Activated B cell treated with CpG ODN at 0.5 μM for 24 hours (primary cell): ENCODE measurements at regions of chr1 and their contacts with region 1.

Region 1: GRCh38 chr1:111628153-111628552 is 8.6 kb downstream of the RAP1A start:
- DNase-seq: no peak
- ATAC-seq: no peak
- H3K4me3 Mint-ChIP-seq: peak overlapping the region; percentile 51
- H3K27ac Mint-ChIP-seq: peak overlapping the region; percentile 66
- H3K4me1 Mint-ChIP-seq: peaks cover 88% of the 10 kb centered on the region
- H3K27me3 Mint-ChIP-seq: no peaks in the 10 kb centered on the region
- CTCF ChIP-seq: no peak

Region 2: DNA sequence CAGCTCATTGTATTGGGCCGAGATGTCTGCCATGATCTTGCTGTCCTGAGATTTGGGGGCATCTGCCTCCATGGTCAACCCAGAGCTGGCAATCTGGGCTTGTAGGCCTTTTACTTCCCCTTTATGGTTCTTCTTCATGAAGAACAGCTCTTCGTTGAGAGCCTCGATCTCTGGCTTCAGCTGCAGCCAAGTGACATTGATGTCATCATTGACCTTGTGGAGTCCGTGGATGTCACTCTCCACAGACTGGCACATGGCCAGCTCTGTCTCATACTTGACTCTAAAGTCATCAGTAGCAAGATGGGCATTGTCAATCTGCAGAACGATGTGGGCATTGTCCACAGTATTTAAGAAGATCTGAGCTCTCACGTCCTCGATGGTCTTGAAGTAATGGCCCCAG is 20.7 kb after region 1 on chr1:
- CTCF ChIA-PET with region 1: no interaction called
- POLR2A ChIA-PET with region 1: interaction called, 4 read pairs
- intact Hi-C with region 1: loop called (anchors 2 kb)
- DNase-seq: no peak
- ATAC-seq: no peak
- H3K4me3 Mint-ChIP-seq: no peak overlapping the region
- H3K27ac Mint-ChIP-seq: no peak overlapping the region
- H3K4me1 Mint-ChIP-seq: peaks cover 68% of the 10 kb centered on the region
- H3K27me3 Mint-ChIP-seq: no peaks in the 10 kb centered on the region
- CTCF ChIP-seq: no peak